ENCODE measurements at regions of chr10 and their contacts with region 1.

Region 1: GRCh38 chr10:89466599-89467035 is 52.2 kb downstream of the IFIT5 start:
- DNase-seq: no peak
- H3K4me3 ChIP-seq: no peak overlapping the region
- CTCF ChIP-seq: peak; percentile 51

Region 2: DNA sequence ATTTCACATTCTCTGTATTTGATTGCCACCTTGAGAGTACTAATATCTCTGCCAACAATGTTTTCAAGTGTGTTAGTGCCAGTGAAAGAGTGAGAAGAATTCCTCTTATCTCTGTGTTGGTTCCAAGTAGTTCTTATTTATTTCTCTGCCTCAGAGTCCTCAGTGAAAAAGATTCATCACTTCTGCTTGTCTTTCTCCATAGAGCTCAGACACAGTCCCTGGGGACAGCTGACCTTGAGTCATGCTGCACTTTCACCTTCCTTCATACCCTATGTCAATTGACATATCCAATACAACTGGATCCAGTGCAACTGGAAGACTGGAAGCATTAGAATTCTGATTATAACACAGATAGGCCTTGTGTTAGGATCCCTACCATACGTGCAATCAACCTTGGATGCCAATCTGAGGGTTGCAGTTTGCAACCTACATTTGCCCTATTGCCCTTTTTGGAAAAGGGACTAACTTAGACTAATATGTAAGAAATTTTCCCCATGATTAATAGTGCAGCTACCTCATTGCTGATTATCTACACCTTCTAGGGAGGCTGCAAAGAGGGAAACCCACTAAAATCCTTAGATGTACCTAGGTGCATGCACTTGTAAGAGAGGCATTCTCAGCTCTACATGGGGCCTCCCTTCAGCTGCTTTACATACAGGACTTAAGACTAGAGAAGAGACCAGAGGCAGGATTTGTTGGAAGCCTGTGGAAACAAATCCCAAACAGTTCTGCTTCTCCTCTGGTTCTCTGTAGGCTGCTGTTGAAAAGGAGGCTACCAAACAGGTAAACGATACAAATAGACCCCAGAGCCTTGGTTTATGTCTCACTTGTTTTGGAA is 156.3 kb before region 1 on chr10:
- CTCF ChIA-PET with region 1: no interaction called
- POLR2A ChIA-PET with region 1: no interaction called
- DNase-seq: no peak
- H3K4me3 ChIP-seq: no peak overlapping the region
- CTCF ChIP-seq: no peak

Region 3: DNA sequence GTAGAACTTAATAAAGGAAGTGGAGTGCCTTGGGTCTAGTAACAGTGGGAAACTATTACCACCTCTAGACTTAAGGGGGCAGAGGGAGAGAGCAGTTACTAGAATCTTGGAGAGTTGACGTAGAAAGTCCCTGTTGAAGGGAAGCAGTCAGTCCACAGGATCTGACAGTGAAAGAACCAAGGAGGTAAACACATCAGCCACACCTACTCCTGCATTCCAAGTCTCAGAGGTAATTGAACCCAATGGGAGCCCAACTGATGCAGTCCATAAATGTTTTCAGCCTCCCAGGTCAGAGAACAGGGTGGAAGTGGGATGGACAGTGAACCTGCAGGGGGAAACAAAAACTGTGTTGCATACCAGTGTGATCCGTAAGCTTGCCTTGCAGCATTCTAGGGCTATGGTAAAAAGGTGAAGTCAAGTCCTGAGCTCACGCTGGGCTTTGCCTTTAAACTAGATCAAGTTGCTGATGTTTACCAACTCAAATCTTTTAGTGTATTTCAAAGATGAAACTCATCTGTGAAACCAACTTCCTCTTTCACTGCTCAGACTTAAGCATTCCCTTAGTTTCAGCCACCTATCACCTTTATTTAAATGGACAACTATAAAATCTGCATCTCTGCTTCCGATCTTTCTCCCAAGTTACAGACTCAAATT is 11.6 kb after region 1 on chr10:
- CTCF ChIA-PET with region 1: interaction called, 16 read pairs
- POLR2A ChIA-PET with region 1: no interaction called
- DNase-seq: no peak
- H3K4me3 ChIP-seq: no peak overlapping the region
- CTCF ChIP-seq: no peak

Region 4: GRCh38 chr10:89490596-89491335 is 24.1 kb after region 1 on chr10:
- CTCF ChIA-PET with region 1: interaction called, 11 read pairs
- POLR2A ChIA-PET with region 1: no interaction called
- DNase-seq: no peak
- H3K4me3 ChIP-seq: no peak overlapping the region
- CTCF ChIP-seq: no peak